Prostate gland (tissue), 2 donors: ENCODE measurements at regions of chr10 and their contacts with region 1.

Region 1: DNA sequence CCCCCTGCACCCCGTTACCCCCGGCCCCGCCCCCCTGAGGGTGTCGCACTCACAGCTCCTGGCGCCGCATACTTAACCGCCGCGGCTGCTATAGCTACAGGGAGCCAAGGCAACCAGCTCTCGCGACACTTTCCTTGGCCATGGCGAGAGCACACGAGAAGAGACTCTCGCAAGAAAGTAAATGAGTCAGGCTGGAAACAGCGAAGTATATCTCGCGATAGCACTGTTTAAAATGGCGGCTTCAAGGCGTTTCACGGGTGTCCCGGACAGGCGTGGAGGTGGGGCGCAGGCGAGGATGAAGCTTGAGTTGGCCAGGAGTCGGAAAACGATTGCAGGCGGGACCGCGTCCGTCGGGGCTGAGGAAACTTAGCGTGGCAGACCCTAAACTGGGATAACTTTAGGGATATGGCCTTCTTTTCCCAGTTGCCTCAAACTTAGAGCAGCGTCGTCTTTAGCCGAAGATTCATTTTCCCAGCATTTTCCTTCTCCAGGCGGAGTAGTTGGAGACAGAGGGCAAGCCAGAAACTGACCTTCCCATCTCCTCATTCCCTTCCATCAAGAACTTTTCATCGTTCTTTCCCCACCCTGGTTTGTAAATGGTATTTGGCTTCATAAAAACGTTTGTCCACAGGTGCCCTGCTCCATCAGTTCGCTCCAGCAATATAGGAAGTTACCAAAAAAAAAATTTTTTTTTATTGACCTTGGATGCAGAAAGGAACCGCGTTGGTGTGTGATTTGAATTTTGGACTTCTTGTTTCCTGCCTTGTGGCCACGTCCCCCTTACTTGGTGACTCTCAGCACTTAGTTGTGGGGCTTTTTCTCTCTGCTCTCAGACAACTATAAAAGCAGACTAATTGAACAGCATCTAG is 15.2 kb downstream of the MYOZ1 start:
- DNase-seq: peak; percentile 96
- H3K4me3 ChIP-seq: peak overlapping the region; percentile 89 to 95
- H3K27ac ChIP-seq: peak overlapping the region; percentile 88 to 92
- H3K4me1 ChIP-seq: no peaks in the 10 kb centered on the region
- H3K27me3 ChIP-seq: no peaks in the 10 kb centered on the region
- CTCF ChIP-seq: no peak
- POLR2A ChIP-seq: peak; percentile 75

Region 2: DNA sequence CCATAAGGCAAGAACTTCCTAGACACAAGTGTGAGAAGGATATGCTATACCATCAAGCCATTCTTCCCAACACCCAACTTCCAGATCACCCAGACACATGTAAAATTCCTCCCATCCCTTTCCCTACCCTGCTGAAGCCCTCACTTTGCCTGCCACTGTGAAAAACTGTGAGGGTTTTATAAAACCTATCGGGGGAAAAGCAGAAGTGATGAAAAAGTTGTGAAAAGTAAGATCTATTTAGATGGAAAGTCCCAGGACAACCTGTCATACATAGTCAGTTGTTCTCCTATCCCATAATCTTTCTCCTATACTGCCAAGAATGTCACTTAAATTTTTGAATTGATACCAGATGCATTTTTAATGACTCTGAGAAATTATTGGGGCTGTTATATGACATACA is 91.3 kb before region 1 on chr10:
- intact Hi-C with region 1: loop called (anchors 5 kb)
- DNase-seq: no peak
- H3K4me3 ChIP-seq: no peak overlapping the region
- H3K27ac ChIP-seq: no peak overlapping the region
- H3K4me1 ChIP-seq: no peaks in the 10 kb centered on the region
- H3K27me3 ChIP-seq: no peaks in the 10 kb centered on the region
- CTCF ChIP-seq: no peak
- POLR2A ChIP-seq: no peak

Region 3: DNA sequence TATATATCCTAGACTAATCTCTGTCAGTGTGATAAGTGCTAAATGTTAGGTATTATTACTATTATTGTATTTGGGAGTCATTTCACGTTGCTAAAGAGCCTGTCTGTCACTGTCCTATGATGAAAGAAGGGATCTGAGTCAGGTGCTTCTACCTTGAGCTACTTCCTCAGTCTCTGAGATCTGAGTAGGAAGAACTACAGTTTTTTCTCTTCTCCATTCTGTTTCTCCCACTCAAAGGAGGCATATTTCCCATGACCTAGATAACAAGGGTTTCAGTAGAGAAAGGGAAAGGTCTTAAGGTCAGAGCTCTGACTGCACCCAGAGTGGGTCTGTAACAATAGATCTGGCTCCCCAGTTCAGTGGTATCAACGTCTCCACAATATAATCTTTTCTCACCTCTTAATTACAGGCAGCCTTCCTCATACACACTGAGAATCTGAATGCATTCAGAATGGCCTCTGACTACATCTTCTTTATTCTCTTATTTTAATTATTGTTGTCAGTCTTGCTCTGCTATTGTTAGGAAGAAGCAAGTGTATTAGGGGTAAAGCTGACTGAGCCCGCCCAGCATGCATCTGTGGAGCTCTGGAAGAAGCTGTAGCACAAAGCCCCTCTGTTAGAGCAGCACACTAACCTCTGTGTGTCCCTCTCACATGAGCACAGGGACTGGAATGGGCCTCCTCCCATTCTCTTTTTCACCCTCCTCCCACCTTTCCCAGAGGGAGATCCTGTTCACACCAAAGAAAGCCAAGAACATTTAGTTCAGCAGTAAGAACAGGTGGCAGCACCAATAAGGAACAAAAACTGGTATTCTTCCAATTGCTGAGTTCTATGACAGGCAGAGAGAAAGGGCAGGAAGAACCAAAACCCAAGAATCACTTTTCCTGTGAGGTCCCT is 73.1 kb before region 1 on chr10:
- intact Hi-C with region 1: loop called (anchors 5 kb)
- DNase-seq: peak; percentile 39
- H3K4me3 ChIP-seq: no peak overlapping the region
- H3K27ac ChIP-seq: peak overlapping the region; percentile 33 to 64
- H3K4me1 ChIP-seq: peaks cover 11% of the 10 kb centered on the region
- H3K27me3 ChIP-seq: no peaks in the 10 kb centered on the region
- CTCF ChIP-seq: no peak
- POLR2A ChIP-seq: no peak

Region 4: DNA sequence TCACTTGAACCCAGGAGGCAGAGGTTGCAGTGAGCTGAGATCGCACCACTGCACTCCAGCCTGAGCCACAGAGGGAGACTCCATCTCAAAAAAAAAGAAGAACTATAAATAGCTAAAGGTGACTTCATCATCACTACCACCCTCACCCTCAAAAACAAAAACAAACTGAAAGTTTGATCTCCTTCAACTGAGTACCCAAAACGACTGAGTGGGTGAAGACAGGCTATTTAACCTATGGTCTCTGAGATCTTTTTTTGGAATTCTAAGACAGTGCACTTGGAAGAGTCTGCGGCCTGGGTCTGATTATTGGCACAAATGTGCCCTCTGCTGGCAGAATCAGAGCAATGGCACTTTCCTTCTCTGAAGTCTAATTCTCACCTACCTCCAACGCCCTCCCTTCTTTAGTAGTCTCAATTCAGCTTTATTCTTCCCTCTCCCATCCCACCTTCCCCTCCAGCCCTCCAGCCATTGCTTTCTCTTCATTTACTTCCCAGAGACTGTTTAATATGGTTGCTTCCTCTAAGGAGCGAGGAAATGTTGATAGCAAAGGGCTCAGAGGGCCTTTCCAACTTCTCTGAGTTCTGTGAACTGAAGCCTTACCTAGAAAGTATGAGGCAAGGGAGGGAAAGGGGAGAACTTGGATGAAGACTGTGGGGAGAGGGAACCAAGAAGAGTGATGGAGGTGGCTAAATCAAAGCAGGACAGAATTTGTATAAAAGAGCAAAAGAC is 18.1 kb after region 1 on chr10:
- intact Hi-C with region 1: loop called (anchors 1 kb)
- DNase-seq: peak; percentile 45
- H3K4me3 ChIP-seq: no peak overlapping the region
- H3K27ac ChIP-seq: no peak overlapping the region
- H3K4me1 ChIP-seq: peaks cover 5% of the 10 kb centered on the region
- H3K27me3 ChIP-seq: no peaks in the 10 kb centered on the region
- CTCF ChIP-seq: peak; percentile 82 to 95 (median 91)
- POLR2A ChIP-seq: no peak

Region 5: GRCh38 chr10:73655257-73655982 is 29.3 kb after region 1 on chr10:
- intact Hi-C with region 1: no loop called
- DNase-seq: no peak
- H3K4me3 ChIP-seq: no peak overlapping the region
- H3K27ac ChIP-seq: no peak overlapping the region
- H3K4me1 ChIP-seq: no peaks in the 10 kb centered on the region
- H3K27me3 ChIP-seq: no peaks in the 10 kb centered on the region
- CTCF ChIP-seq: no peak
- POLR2A ChIP-seq: no peak